Activated CD4-positive, alpha-beta memory T cell treated with anti-CD3 and anti-CD28 coated beads for 36 hours (primary cell): ENCODE measurements at regions of chr3 and their contacts with region 1.

Region 1: DNA sequence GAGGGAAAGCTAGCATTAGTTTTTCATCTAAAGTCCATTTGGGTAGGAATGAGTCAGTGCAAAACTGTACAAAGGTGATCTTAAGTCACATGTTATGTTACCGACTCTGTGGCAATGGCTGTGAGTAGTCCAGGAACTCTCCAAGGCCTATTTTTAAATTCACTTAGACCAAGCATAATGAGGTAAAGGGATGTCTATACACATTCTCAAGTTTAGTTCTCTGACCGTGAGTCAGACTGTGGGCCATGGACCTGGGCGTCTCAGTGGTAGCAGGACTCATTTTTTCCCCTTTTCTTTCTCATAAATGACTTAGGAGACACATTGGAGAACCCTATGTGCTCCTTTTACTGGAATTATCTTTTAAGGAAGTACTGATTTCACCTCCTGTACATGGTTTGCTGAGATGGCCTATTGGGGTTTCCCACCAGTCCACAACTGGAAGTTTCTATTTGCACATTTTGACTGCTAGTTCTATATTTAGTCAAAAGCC is 488.7 kb upstream of the TPRG1 start:
- DNase-seq: peak; percentile 74
- H3K4me3 Mint-ChIP-seq: no peak overlapping the region
- H3K27ac Mint-ChIP-seq: peak overlapping the region; percentile 40
- H3K4me1 Mint-ChIP-seq: peaks cover 41% of the 10 kb centered on the region
- H3K27me3 Mint-ChIP-seq: no peaks in the 10 kb centered on the region

Region 2: DNA sequence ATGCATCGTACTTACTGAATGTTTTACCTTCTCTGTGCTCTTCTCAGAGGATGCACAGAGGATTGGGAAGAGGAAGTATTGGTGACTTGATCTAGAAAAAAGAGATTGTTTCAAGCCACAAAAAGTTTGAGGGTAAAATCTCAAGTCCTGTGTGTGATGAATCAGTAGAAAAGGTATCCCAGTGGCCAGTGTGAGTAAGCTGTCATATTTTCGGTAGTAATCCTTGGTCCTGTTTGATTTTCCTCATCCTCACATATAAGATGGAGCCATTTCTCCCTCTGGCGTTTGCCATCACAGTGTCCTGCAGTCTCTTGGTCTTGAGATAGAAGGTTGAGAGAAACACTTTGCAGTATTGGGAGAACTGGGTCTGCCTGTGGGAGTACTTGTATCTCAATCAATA is 362.3 kb before region 1 on chr3:
- CTCF ChIA-PET with region 1: no interaction called
- POLR2A ChIA-PET with region 1: no interaction called
- intact Hi-C with region 1: loop called (anchors 5 kb)
- DNase-seq: no peak
- H3K4me3 Mint-ChIP-seq: no peak overlapping the region
- H3K27ac Mint-ChIP-seq: no peak overlapping the region
- H3K4me1 Mint-ChIP-seq: peaks cover 58% of the 10 kb centered on the region
- H3K27me3 Mint-ChIP-seq: peaks cover 2% of the 10 kb centered on the region

Region 3: GRCh38 chr3:188533612-188534357 is 149.3 kb before region 1 on chr3:
- CTCF ChIA-PET with region 1: no interaction called
- POLR2A ChIA-PET with region 1: no interaction called
- intact Hi-C with region 1: no loop called
- DNase-seq: no peak
- H3K4me3 Mint-ChIP-seq: no peak overlapping the region
- H3K27ac Mint-ChIP-seq: no peak overlapping the region
- H3K4me1 Mint-ChIP-seq: no peaks in the 10 kb centered on the region
- H3K27me3 Mint-ChIP-seq: no peaks in the 10 kb centered on the region

Region 4: DNA sequence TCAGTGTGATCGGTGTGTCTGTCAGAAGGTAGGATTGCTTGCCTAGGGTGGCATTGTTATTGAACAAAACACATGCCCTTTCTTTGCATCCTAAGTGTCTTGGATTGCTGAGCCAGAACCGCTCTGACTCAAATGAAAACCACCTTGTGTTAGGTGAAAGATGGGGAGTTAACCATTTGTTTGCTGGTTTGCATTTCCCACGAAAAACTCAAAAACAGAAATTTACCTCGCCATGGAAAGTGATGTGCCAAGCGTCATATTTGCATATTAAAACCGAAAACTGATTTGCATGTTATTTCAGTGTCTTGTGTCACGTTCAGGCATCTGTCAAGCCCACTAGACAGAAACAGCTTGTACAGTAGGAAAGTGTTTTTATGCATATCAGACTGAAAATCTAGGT is 14.1 kb after region 1 on chr3:
- CTCF ChIA-PET with region 1: no interaction called
- POLR2A ChIA-PET with region 1: no interaction called
- intact Hi-C with region 1: loop called (anchors 1 kb)
- DNase-seq: peak; percentile 55
- H3K4me3 Mint-ChIP-seq: no peak overlapping the region
- H3K27ac Mint-ChIP-seq: peak overlapping the region; percentile 7
- H3K4me1 Mint-ChIP-seq: peaks cover 50% of the 10 kb centered on the region
- H3K27me3 Mint-ChIP-seq: peaks cover 7% of the 10 kb centered on the region

Region 5: DNA sequence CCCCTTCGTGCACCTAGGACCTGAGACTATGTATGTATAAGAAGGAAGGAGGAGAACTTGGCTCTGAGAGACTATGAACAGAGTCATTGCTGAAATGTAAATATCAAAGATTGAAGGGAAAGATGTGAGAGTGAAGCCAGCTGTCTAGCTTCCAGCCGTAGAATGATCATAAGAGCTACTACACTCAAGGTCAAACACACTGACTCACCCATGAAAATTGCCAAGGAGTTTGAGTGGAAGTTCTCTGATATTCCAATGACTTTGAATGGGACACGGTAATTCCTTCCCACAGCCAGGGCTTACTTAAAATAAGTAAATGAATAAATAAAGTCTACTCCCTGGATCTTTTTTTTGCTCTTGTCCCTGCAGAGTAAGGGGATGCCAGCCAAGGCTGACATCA is 89.8 kb after region 1 on chr3:
- CTCF ChIA-PET with region 1: no interaction called
- POLR2A ChIA-PET with region 1: no interaction called
- intact Hi-C with region 1: no loop called
- DNase-seq: no peak
- H3K4me3 Mint-ChIP-seq: no peak overlapping the region
- H3K27ac Mint-ChIP-seq: no peak overlapping the region
- H3K4me1 Mint-ChIP-seq: no peaks in the 10 kb centered on the region
- H3K27me3 Mint-ChIP-seq: no peaks in the 10 kb centered on the region